ENCODE measurements at regions of chr6 and their contacts with region 1.

Region 1: DNA sequence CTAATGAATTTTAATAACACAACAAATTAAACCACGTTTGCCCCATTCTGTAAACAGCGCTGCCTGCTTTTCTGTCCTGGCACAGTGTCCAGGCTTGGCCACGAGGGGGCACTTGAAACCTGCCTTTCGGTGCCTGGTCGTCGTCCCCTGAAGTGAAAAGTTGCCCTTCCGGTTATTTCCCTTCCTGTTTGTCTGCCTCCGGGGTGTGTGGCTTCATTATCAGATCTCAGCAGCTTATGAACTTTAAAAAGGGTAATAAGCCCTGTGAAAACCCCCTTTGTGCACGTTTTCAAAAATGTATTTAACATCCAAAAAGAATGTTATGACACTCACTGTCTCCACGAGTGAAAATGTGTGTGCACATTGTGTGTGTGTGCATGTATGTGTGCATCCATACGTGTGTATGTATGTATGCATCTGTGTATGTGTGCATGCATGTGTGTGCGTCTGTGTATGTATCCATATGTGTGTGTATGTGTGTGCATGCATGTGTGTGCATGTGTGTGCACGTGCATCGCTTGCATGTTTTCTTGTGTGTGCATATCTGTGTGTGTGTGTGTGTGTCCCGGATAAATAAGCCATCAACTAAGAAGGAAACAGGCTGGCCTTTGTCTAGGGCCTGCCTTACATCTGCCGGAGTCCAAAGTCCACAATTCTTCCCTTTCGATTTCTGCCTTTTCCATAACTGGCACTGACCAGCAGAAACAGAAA is 358.4 kb downstream of the THBS2 start:
- DNase-seq: peak; percentile 81 to 90
- ATAC-seq: peak; percentile 95

Region 2: DNA sequence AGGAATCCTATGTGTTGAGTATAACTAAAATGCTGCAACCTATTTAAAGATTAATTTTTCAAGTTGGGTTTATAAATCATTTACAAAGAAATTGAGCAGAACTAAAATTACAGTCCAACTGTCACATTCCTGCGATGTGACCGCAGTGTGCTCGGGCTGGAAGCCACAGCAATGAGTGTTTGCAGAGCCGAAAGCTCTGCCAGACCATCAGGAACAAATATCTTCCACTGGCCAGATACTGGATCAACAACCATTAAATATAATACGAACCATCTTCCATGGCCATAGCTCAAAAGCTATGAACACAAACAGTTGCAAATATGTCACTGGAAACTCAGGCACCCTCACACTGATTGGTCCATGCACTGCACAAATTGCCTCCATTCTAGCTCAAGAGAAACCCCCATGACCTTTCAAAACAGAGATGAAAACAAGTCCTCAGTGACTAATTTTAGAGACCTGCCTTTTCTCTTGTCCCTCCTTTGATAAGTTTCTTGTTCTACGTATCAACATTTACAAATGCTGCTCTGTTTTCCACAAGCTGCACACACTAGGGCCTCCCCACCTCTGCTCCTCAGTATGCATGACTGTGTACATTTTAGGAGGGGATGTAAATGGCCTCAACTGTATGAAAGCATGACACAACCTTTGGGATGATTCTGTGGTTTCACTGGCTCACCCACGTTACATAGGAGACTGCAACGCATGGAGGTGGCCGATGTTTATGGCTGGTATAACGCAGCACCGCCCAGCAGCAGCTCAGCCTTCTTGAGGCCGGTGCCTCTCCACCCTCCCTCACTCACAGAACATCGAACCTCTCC is 634.9 kb after region 1 on chr6:
- intact Hi-C with region 1: loop called in 1 of 2 experiments (anchors 10 kb)
- DNase-seq: peak; percentile 40 to 65
- ATAC-seq: peak; percentile 92